HepG2 (cell line): ENCODE measurements at regions of chr1 and their contacts with region 1.

Region 1: GRCh38 chr1:62175568-62176179 is 19.0 kb upstream of the L1TD1 start:
- DNase-seq: peak; percentile 47
- ATAC-seq: peak; percentile 52
- H3K4me3 ChIP-seq: no peak overlapping the region
- H3K27ac ChIP-seq: no peak overlapping the region
- H3K4me1 ChIP-seq: peaks cover 22% of the 10 kb centered on the region
- H3K27me3 ChIP-seq: no peaks in the 10 kb centered on the region; a peak in 1 of 5 replicates
- CTCF ChIP-seq: peak; percentile 82
- EP300 ChIP-seq: no peak
- POLR2A ChIP-seq: no peak
- RAD21 ChIP-seq: peak; percentile 68

Region 2: DNA sequence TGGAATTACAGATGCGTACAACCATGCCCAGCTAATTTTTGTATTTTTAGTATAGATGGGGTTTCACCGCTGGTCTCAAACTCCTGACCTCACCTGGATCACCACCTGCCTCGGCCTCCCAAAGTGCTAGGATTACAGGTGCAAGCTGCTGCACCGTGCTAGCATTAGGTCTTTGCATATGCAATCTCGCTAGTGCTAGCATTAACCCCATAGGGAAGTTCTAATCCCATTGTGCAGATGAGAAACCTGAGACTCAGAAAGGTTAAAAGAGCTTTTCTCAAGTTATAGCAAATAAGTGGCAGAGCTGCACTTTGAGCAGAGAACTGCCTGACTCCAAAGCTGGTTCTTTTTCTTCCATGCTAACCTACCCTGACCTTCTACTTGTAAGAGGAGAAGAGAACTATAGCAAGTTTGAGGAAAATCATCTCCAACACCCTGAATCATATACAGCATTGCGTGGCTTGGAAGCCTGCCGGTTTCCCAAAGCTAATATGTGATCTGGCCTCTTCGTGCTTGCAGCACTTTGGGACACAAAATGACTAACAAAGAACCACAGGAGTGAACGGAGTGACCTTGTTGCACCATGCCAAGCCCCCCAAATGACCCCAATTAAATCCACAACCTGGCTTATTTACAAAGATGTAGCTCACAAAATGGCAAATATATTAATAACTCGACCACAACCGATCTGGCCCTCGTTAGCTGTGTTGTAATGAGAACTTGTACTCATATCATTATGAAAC is 635.8 kb before region 1 on chr1:
- CTCF ChIA-PET with region 1: no interaction called
- POLR2A ChIA-PET with region 1: no interaction called
- in situ Hi-C with region 1: no loop called
- intact Hi-C with region 1: no loop called
- DNase-seq: no peak
- ATAC-seq: no peak
- H3K4me3 ChIP-seq: no peak overlapping the region
- H3K27ac ChIP-seq: no peak overlapping the region
- H3K4me1 ChIP-seq: no peaks in the 10 kb centered on the region
- H3K27me3 ChIP-seq: no peaks in the 10 kb centered on the region; a peak in 2 of 5 replicates
- CTCF ChIP-seq: no peak
- EP300 ChIP-seq: no peak
- POLR2A ChIP-seq: no peak
- RAD21 ChIP-seq: no peak

Region 3: GRCh38 chr1:61956016-61956645 is 219.5 kb before region 1 on chr1:
- CTCF ChIA-PET with region 1: no interaction called
- POLR2A ChIA-PET with region 1: no interaction called
- in situ Hi-C with region 1: no loop called
- intact Hi-C with region 1: no loop called
- DNase-seq: no peak
- ATAC-seq: no peak
- H3K4me3 ChIP-seq: no peak overlapping the region
- H3K27ac ChIP-seq: no peak overlapping the region
- H3K4me1 ChIP-seq: no peaks in the 10 kb centered on the region
- H3K27me3 ChIP-seq: no peaks in the 10 kb centered on the region
- CTCF ChIP-seq: no peak
- EP300 ChIP-seq: no peak
- POLR2A ChIP-seq: no peak
- RAD21 ChIP-seq: no peak

Region 4: GRCh38 chr1:62161711-62162110 is 14.0 kb before region 1 on chr1:
- CTCF ChIA-PET with region 1: no interaction called
- POLR2A ChIA-PET with region 1: no interaction called
- in situ Hi-C with region 1: no loop called
- intact Hi-C with region 1: no loop called
- DNase-seq: no peak
- ATAC-seq: no peak
- H3K4me3 ChIP-seq: no peak overlapping the region
- H3K27ac ChIP-seq: no peak overlapping the region
- H3K4me1 ChIP-seq: no peaks in the 10 kb centered on the region
- H3K27me3 ChIP-seq: no peaks in the 10 kb centered on the region
- CTCF ChIP-seq: no peak
- EP300 ChIP-seq: no peak
- POLR2A ChIP-seq: no peak
- RAD21 ChIP-seq: no peak

Region 5: DNA sequence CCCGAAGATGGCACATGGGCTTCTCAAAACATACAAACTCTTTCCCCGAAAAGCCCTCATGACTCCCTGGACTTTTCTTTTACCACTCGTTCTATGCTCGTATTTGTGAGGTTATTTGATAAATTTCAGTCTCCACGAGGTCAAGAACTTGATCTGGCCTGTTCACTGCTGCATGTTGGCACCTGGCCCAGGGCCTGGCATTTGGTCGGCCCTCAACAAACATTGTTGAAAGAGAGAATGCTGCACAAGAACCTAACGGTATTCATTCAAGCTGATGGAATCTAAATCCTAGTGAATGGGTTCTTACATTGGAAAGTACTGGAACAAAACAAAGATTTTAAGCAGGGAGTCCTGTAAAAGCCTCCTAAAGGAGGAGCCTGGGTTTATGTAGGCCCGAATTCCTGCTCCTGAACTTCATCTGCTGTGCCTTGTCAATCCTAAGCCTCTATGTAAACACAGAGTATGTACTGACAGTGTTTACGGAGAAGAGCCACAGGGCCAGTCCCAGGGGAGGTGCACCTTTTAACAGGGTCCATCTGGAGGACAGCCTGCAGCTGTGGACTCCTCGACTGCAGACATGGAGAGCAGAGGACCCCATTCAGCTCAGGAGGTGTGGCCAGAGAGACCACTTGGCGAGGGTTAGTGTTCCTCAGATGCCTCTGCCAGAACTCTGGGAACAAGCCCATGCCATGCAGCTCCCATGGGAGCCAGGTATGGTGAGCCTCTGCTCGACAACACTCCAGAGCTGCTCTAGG is 65.9 kb after region 1 on chr1:
- CTCF ChIA-PET with region 1: interaction called, 3 read pairs
- POLR2A ChIA-PET with region 1: interaction called, 3 read pairs
- in situ Hi-C with region 1: no loop called
- intact Hi-C with region 1: loop called (anchors 5 kb)
- DNase-seq: peak; percentile 91
- ATAC-seq: peak; percentile 91
- H3K4me3 ChIP-seq: peak overlapping the region in 1 of 3 experiments; percentile 22; a peak in 2 of 6 replicates
- H3K27ac ChIP-seq: peak overlapping the region; percentile 66
- H3K4me1 ChIP-seq: peaks cover 75% of the 10 kb centered on the region
- H3K27me3 ChIP-seq: no peaks in the 10 kb centered on the region
- CTCF ChIP-seq: peak; percentile 37
- EP300 ChIP-seq: peak in 1 of 2 experiments; percentile 71; a peak in 2 of 4 replicates
- POLR2A ChIP-seq: no peak
- RAD21 ChIP-seq: peak; percentile 29; the same call in 1 of the 2 replicates

Region 6: DNA sequence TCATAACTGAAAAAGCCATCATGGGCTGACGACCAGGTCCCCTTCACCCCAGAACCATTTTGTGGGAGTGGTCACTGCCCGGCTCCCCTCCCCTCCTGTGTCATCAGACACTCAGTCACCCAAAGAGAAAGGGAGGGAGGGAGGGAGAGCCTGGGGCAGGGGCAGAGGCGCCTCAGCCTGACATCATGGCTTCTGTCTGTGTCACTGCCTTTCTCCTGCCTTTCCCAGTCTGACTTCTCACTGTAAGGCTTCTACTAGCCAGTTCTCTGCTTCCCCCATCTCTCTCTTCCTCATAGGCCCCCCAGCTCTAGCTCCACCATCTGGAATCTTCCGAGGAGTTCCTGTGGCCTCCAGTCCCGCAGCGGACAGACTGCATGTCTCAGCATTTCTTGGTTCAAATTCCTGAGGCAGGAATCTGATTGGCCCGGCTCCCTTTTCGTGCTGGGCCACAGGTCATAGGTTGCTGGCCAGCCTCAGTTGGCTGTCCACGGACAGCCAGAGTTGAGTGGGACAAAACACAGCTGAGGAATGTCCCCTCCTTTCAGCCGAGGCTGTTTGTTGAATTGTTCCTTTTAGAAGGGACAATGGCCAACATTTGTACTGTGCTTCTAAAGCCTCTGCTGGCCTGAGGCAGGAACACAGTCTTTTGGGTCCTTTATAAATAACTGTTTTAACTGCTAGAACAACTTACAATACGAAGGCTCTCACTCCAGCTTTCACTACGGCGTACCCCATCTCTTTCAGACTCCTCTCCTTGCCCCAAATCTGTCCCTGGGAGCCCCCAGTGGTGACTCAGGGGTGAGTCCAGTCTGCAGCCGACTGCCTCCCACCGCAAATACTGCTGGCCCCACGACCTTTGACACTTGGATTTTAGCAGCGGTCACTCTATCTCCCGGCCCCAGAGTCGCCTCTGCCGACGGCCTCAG is 162.3 kb after region 1 on chr1:
- CTCF ChIA-PET with region 1: interaction called, 6 read pairs
- POLR2A ChIA-PET with region 1: no interaction called
- in situ Hi-C with region 1: no loop called
- intact Hi-C with region 1: loop called (anchors 1 kb)
- DNase-seq: peak; percentile 45
- ATAC-seq: peak; percentile 85
- H3K4me3 ChIP-seq: peak overlapping the region; percentile 52 to 65 (median 62)
- H3K27ac ChIP-seq: no peak overlapping the region
- H3K4me1 ChIP-seq: peaks cover 33% of the 10 kb centered on the region
- H3K27me3 ChIP-seq: no peaks in the 10 kb centered on the region; a peak in 1 of 5 replicates
- CTCF ChIP-seq: peak; percentile 61
- EP300 ChIP-seq: no peak
- POLR2A ChIP-seq: no peak
- RAD21 ChIP-seq: 0 out of 2 replicates have a peak, but pooled peaks have one; percentile 33